ENCODE measurements at regions of chr17 and their contacts with region 1.

Region 1: GRCh38 chr17:38729886-38730525 is at the start of gene CISD3:
- DNase-seq: peak; percentile 90
- H3K4me3 Mint-ChIP-seq: peak within 1 kb of the TSS; percentile 99
- H3K27ac Mint-ChIP-seq: peak within 1 kb of the TSS; percentile 100
- H3K4me1 Mint-ChIP-seq: peaks cover 78% of the 10 kb centered on the region
- H3K27me3 Mint-ChIP-seq: no peaks in the 10 kb centered on the region
- total RNA-seq, gene CISD3: 42.8 to 48.6 TPM

Region 2: DNA sequence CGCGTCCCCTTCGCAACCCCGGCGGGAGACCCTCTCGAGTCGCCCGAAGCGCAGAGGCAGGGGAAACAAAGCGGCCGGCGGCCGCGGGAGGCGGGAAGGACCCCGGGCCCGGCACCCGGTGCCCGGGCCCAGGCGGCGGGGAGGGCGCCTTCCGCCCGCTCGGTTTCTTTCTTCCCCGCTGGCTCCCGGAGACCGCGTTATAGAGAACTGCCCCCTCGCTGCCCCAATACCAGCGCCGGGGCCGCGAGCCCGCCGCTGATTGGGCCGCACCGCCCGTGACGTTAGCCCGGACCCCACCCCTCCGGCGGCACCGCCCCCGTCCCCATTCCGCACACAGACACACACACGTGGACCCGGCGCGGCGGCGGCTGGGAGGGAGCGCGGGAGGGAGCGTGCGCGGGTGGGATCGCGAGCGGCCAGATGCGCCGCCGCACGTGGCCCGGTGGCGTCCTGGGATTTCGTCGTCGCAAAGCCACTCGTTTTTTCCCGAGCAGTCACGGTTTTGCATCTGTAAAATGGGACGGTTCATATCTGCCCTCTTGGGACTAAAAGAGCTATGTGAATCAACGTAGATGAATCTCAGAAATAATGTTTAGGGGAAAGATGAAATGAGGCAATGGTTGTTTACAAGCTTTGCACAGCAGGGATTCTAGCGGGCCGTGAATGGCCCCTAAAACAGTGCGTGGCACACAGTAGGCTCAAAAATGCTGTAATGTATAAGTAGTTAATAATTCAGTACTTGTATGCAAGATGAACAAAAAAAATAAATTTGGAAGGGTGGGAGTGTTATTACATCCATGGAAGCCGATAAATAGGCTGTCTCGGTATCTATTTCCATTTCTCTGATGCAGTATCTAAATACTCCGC is 55.0 kb before region 1 on chr17 and contains the start of gene EPOP:
- CTCF ChIA-PET with region 1: interaction called, 86 read pairs
- POLR2A ChIA-PET with region 1: interaction called, 52 read pairs
- DNase-seq: peak; percentile 91
- H3K4me3 Mint-ChIP-seq: peak within 1 kb of the TSS; percentile 63
- H3K27ac Mint-ChIP-seq: no peak within 1 kb of the TSS
- H3K4me1 Mint-ChIP-seq: peaks cover 44% of the 10 kb centered on the region
- H3K27me3 Mint-ChIP-seq: peaks cover 27% of the 10 kb centered on the region
- total RNA-seq, gene EPOP: 10.2 to 10.3 TPM

Region 3: GRCh38 chr17:38702166-38702899 is 27.7 kb before region 1 on chr17:
- CTCF ChIA-PET with region 1: interaction called, 17 read pairs
- POLR2A ChIA-PET with region 1: interaction called, 419 read pairs
- DNase-seq: peak; percentile 86
- H3K4me3 Mint-ChIP-seq: peak overlapping the region; percentile 87
- H3K27ac Mint-ChIP-seq: peak overlapping the region; percentile 99
- H3K4me1 Mint-ChIP-seq: peaks cover 46% of the 10 kb centered on the region
- H3K27me3 Mint-ChIP-seq: no peaks in the 10 kb centered on the region

Region 4: DNA sequence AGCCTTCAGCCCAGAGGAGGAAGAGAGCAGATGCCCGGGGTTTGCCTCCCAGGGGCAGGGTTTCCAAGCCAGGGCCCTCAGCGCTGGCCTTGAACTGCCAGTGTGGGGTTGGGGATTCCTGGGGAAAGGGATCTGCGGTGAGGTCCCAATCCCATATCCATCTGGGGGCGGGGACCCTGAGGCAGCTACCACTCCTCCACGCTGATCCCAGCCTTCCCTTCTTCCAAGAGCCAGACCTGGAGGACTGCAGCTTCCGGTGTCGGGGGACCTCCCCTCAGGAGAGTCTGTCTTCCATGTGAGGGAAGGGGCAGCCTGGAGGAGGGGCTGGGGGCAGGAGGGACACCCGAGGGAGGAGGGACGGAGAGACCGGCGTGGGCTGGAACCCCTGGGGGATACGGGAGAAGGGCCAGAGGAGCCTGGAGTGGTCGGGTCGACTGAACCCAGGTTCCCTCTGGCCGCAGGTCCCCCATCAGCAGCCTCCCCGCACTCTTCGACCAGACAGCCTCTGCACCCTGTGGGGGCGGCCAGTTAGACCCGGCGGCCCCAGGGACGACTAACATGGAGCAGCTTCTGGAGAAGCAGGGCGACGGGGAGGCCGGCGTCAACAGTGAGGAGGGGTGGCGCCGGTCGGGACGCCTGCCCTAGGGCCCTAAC is 10.6 kb before region 1 on chr17:
- CTCF ChIA-PET with region 1: interaction called, 16 read pairs
- POLR2A ChIA-PET with region 1: interaction called, 42 read pairs
- DNase-seq: no peak
- H3K4me3 Mint-ChIP-seq: no peak overlapping the region
- H3K27ac Mint-ChIP-seq: peak overlapping the region; percentile 35
- H3K4me1 Mint-ChIP-seq: peaks cover 20% of the 10 kb centered on the region
- H3K27me3 Mint-ChIP-seq: no peaks in the 10 kb centered on the region

Region 5: DNA sequence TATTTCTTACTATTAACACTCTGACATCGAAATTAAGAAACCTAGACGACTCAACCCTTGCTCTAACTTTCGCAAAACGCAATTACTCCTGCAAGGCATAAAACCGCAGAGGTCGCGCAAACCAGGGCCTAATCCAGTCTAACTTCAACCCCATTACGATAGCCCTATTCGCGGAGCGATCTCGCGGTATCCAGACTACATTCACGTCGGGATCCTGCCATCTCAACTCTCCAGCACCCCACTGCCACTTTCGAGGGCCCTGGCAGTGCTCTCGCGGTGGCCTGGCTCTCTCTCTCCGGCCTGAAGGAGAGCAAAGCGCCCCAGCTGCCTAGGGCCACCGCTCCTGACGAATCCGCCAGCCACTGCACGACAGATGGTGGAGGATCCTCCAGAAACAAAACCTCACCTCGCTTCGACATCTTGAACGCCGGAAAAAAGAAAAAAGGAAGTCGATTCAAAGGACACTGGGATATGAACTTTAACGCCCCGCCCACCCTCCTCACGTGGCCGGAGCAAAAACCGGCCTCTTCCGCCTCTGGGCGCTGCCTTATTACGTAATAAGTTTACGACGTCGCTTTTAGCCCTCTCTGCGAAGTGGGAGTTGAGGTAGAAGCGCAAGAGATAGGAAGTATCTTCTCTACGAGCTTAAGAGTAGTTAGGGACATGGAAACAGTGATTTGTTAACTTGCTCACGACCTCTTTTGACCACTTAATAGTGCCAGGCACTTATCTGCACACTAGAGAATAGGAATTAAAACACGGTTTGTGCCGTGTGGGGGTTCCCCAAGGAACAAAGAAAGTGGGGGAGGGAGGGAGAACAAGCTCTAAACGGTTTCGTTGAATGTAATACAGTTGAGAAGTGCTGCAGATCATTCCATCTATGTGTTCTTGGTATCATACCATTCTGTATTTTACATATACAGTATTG is 123.5 kb after region 1 on chr17 and contains the start of gene RPL23:
- CTCF ChIA-PET with region 1: interaction called, 3 read pairs
- POLR2A ChIA-PET with region 1: interaction called, 11 read pairs
- DNase-seq: peak; percentile 94
- H3K4me3 Mint-ChIP-seq: peak within 1 kb of the TSS; percentile 95
- H3K27ac Mint-ChIP-seq: peak within 1 kb of the TSS; percentile 98
- H3K4me1 Mint-ChIP-seq: peaks cover 49% of the 10 kb centered on the region
- H3K27me3 Mint-ChIP-seq: no peaks in the 10 kb centered on the region
- total RNA-seq, gene RPL23: 933 to 960 TPM

Measured in activated CD4-positive, alpha-beta memory T cell treated with anti-CD3 and anti-CD28 coated beads, Interleukin-2, amount 10 ng/mL, durations not matched to agents 7 days and 5 days (primary cell).